CD8-positive, alpha-beta T cell (primary cell): ENCODE measurements at regions of chr11 and their contacts with region 1.

Region 1: GRCh38 chr11:61567286-61568061 is 13.4 kb downstream of the SYT7 start:
- DNase-seq: peak; percentile 54 to 78 (median 71)
- ATAC-seq: peak; percentile 96
- H3K4me3 ChIP-seq: no peak overlapping the region
- H3K4me3 Mint-ChIP-seq: no peak overlapping the region
- H3K27ac ChIP-seq: no peak overlapping the region
- H3K27ac Mint-ChIP-seq: no peak overlapping the region
- H3K4me1 ChIP-seq: no peaks in the 10 kb centered on the region
- H3K4me1 Mint-ChIP-seq: peaks cover 1% of the 10 kb centered on the region
- H3K27me3 ChIP-seq: peaks cover 2 to 18% of the 10 kb centered on the region in 2 experiments
- H3K27me3 Mint-ChIP-seq: peaks cover 61% of the 10 kb centered on the region
- CTCF ChIP-seq: no peak

Region 2: DNA sequence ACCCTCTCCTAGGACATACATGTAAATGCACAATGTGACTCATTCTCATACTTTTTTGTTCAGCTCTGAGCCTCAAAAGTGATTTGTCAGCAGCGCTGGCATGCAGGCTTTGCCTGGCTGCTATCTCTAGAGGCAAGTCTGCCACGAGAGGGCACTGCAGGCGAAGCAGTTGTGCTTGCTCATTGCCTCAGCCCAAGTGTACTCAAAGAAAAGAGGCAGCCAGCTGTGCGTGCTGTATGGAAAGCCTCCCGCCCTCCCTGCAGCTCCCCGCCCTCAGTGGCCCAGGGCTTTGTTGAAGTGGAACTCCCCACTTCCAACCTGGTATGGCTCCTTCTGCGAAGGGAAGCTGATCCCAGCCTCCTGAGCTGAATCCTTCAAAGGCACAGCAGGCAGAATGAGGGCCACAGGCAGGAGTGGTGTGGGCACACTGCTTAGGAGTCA is 121.2 kb before region 1 on chr11:
- CTCF ChIA-PET with region 1: no interaction called
- POLR2A ChIA-PET with region 1: no interaction called
- intact Hi-C with region 1: no loop called
- DNase-seq: peak; percentile 35 to 74 (median 62)
- ATAC-seq: peak; percentile 93
- H3K4me3 ChIP-seq: no peak overlapping the region
- H3K4me3 Mint-ChIP-seq: no peak overlapping the region
- H3K27ac ChIP-seq: no peak overlapping the region
- H3K27ac Mint-ChIP-seq: no peak overlapping the region
- H3K4me1 ChIP-seq: no peaks in the 10 kb centered on the region
- H3K4me1 Mint-ChIP-seq: peaks cover 17% of the 10 kb centered on the region
- H3K27me3 ChIP-seq: no peaks in the 10 kb centered on the region
- H3K27me3 Mint-ChIP-seq: no peaks in the 10 kb centered on the region
- CTCF ChIP-seq: peak; percentile 45

Region 3: GRCh38 chr11:61532139-61533038 is 35.1 kb before region 1 on chr11:
- CTCF ChIA-PET with region 1: no interaction called
- POLR2A ChIA-PET with region 1: no interaction called
- intact Hi-C with region 1: no loop called
- DNase-seq: peak in 7 of 9 experiments; percentile 26 to 58 (median 38)
- ATAC-seq: peak; percentile 55
- H3K4me3 ChIP-seq: no peak overlapping the region
- H3K4me3 Mint-ChIP-seq: no peak overlapping the region
- H3K27ac ChIP-seq: no peak overlapping the region
- H3K27ac Mint-ChIP-seq: no peak overlapping the region
- H3K4me1 ChIP-seq: no peaks in the 10 kb centered on the region
- H3K4me1 Mint-ChIP-seq: no peaks in the 10 kb centered on the region
- H3K27me3 ChIP-seq: no peaks in the 10 kb centered on the region
- H3K27me3 Mint-ChIP-seq: peaks cover 28% of the 10 kb centered on the region
- CTCF ChIP-seq: peak; percentile 68

Region 4: GRCh38 chr11:61581030-61581928 is 13.8 kb after region 1 on chr11 and contains the start of gene SYT7:
- CTCF ChIA-PET with region 1: interaction called, 4 read pairs
- POLR2A ChIA-PET with region 1: no interaction called
- intact Hi-C with region 1: loop called in 1 of 2 experiments (anchors 1 kb)
- DNase-seq: peak; percentile 87 to 97 (median 93)
- ATAC-seq: peak; percentile 87
- H3K4me3 ChIP-seq: peak within 1 kb of the TSS; percentile 22 to 38
- H3K4me3 Mint-ChIP-seq: peak within 1 kb of the TSS; percentile 86
- H3K27ac ChIP-seq: no peak within 1 kb of the TSS
- H3K27ac Mint-ChIP-seq: peak within 1 kb of the TSS; percentile 33
- H3K4me1 ChIP-seq: peaks cover 14% of the 10 kb centered on the region
- H3K4me1 Mint-ChIP-seq: peaks cover 14% of the 10 kb centered on the region
- H3K27me3 ChIP-seq: peaks cover 13 to 20% of the 10 kb centered on the region in 2 experiments
- H3K27me3 Mint-ChIP-seq: peaks cover 36% of the 10 kb centered on the region
- CTCF ChIP-seq: no peak
- total RNA-seq, gene SYT7: not detected

Region 5: DNA sequence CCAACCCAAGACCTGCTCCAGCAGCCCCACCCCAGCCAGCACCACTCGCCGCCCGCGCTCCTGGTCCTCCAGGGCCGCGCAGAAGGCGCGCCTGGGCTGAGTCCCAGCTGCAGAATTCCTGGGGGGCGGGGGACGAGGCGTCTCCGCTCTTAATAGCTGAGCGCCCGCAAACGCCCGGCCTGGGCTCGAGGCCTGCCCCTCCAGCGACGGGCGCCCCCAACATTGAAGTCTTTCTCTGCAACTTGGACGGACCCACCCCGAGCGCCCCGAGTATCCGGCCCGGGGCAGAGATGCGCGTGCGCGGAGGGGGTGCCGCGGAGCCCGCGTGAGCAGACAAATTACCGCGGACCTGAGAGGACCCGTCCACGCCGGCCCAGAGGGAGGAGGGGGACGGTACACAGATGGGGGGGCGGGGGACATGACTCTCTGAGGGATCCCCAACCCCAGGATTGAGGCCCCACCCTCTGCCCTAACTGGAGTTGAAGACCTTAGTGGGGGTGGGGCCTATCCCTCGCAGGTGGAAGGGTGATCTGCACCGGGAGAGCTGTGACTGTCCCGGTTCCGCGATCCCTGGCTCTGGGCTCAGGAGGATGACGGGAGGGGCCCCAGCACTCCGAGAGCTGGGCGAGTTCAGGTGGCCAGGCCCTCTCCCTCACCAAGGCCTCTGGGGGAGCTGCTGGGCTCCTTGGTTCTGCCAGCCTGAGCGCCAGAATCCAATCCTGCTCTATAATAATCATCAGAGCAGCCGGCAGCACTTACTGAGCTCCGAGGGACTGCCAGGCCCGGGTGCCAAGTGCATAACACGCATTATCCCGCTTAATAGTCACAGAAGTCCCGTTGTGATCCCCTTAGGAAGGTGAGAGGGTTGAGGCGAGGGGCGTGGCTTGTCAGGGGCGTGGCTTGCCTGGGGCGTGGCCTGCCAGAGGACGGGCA is 20.3 kb after region 1 on chr11:
- CTCF ChIA-PET with region 1: no interaction called
- POLR2A ChIA-PET with region 1: no interaction called
- intact Hi-C with region 1: loop called in 1 of 2 experiments (anchors 2 kb)
- DNase-seq: peak; percentile 29 to 77 (median 68)
- ATAC-seq: peak; percentile 75
- H3K4me3 ChIP-seq: peak overlapping the region; percentile 52 to 78
- H3K4me3 Mint-ChIP-seq: peak overlapping the region; percentile 81
- H3K27ac ChIP-seq: no peak overlapping the region
- H3K27ac Mint-ChIP-seq: no peak overlapping the region
- H3K4me1 ChIP-seq: peaks cover 18% of the 10 kb centered on the region
- H3K4me1 Mint-ChIP-seq: peaks cover 17% of the 10 kb centered on the region
- H3K27me3 ChIP-seq: peaks cover 0 to 5% of the 10 kb centered on the region in 2 experiments
- H3K27me3 Mint-ChIP-seq: peaks cover 32% of the 10 kb centered on the region
- CTCF ChIP-seq: no peak

Region 6: GRCh38 chr11:61752117-61752924 is 184.8 kb after region 1 on chr11 and contains the start of gene MYRF:
- CTCF ChIA-PET with region 1: no interaction called
- POLR2A ChIA-PET with region 1: no interaction called
- intact Hi-C with region 1: no loop called
- DNase-seq: peak; percentile 29 to 78 (median 54)
- ATAC-seq: peak; percentile 92
- H3K4me3 ChIP-seq: peak within 1 kb of the TSS; percentile 33 to 42
- H3K4me3 Mint-ChIP-seq: peak within 1 kb of the TSS; percentile 81
- H3K27ac ChIP-seq: no peak within 1 kb of the TSS
- H3K27ac Mint-ChIP-seq: no peak within 1 kb of the TSS
- H3K4me1 ChIP-seq: peaks cover 16% of the 10 kb centered on the region
- H3K4me1 Mint-ChIP-seq: peaks cover 15% of the 10 kb centered on the region
- H3K27me3 ChIP-seq: peaks cover 3 to 10% of the 10 kb centered on the region in 2 experiments
- H3K27me3 Mint-ChIP-seq: peaks cover 33% of the 10 kb centered on the region
- CTCF ChIP-seq: peak; percentile 22
- total RNA-seq, gene MYRF: 0.62 to 0.67 TPM